ENCODE measurements at regions of chr12 and their contacts with region 1.

Region 1: GRCh38 chr12:76277480-76277879 is 70.7 kb downstream of the BBS10 start:
- DNase-seq: no peak
- ATAC-seq: no peak
- H3K4me3 Mint-ChIP-seq: no peak overlapping the region
- H3K27ac Mint-ChIP-seq: no peak overlapping the region
- H3K4me1 Mint-ChIP-seq: peaks cover 14% of the 10 kb centered on the region
- H3K27me3 Mint-ChIP-seq: peaks cover 33% of the 10 kb centered on the region

Region 2: GRCh38 chr12:76158518-76159321 is 118.8 kb before region 1 on chr12:
- CTCF ChIA-PET with region 1: no interaction called
- POLR2A ChIA-PET with region 1: interaction called, 3 read pairs
- intact Hi-C with region 1: loop called (anchors 1 to 2 kb)
- DNase-seq: peak; percentile 85
- ATAC-seq: peak; percentile 97
- H3K4me3 Mint-ChIP-seq: peak overlapping the region; percentile 18
- H3K27ac Mint-ChIP-seq: peak overlapping the region; percentile 26
- H3K4me1 Mint-ChIP-seq: peaks cover 15% of the 10 kb centered on the region
- H3K27me3 Mint-ChIP-seq: peaks cover 2% of the 10 kb centered on the region

Region 3: GRCh38 chr12:76183459-76184186 is 93.9 kb before region 1 on chr12:
- CTCF ChIA-PET with region 1: no interaction called
- POLR2A ChIA-PET with region 1: no interaction called
- intact Hi-C with region 1: loop called (anchors 1 kb)
- DNase-seq: peak; percentile 75
- ATAC-seq: peak; percentile 94
- H3K4me3 Mint-ChIP-seq: no peak overlapping the region
- H3K27ac Mint-ChIP-seq: peak overlapping the region; percentile 68
- H3K4me1 Mint-ChIP-seq: peaks cover 12% of the 10 kb centered on the region
- H3K27me3 Mint-ChIP-seq: peaks cover 49% of the 10 kb centered on the region

Region 4: DNA sequence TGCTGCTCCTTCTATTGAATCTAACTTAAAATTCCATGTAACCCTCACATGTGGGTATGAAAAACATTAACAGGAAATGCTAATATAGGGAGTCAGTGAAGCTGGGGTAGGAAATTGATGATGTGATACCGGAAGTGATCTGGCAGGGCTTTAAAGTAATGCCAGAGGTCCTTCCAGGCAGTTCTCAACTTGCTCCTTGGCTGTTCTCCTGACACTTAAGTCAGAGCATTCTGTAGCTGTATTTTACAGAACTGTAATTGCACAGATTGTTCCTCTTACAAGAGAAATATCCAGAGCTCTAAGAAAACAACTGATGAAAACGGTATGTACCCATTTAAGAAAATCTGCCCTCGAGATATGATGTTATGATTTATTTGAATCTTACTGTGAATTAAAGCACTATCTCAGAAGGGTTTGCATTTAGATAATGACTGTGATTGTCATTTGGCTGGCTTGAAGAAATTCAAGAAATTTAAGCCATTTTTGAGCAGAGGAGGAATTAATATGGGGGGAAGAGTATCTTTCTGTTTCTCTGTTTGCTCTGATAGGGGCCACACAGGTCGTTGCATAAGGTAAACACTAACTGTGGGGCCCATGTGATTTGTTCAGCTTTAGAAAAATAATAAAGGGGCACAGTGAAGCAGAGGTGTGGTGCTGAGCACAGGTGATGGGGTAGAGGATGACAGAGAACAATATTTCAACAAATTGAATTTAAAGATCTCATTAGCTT is 17.7 kb before region 1 on chr12:
- CTCF ChIA-PET with region 1: interaction called, 3 read pairs
- POLR2A ChIA-PET with region 1: no interaction called
- intact Hi-C with region 1: loop called in 1 of 2 experiments (anchors 2 kb)
- DNase-seq: no peak
- ATAC-seq: no peak
- H3K4me3 Mint-ChIP-seq: no peak overlapping the region
- H3K27ac Mint-ChIP-seq: no peak overlapping the region
- H3K4me1 Mint-ChIP-seq: no peaks in the 10 kb centered on the region
- H3K27me3 Mint-ChIP-seq: peaks cover 14% of the 10 kb centered on the region